Left ventricle myocardium inferior (tissue), 1 donor: ENCODE measurements at regions of chr18 and their contacts with region 1.

Region 1: DNA sequence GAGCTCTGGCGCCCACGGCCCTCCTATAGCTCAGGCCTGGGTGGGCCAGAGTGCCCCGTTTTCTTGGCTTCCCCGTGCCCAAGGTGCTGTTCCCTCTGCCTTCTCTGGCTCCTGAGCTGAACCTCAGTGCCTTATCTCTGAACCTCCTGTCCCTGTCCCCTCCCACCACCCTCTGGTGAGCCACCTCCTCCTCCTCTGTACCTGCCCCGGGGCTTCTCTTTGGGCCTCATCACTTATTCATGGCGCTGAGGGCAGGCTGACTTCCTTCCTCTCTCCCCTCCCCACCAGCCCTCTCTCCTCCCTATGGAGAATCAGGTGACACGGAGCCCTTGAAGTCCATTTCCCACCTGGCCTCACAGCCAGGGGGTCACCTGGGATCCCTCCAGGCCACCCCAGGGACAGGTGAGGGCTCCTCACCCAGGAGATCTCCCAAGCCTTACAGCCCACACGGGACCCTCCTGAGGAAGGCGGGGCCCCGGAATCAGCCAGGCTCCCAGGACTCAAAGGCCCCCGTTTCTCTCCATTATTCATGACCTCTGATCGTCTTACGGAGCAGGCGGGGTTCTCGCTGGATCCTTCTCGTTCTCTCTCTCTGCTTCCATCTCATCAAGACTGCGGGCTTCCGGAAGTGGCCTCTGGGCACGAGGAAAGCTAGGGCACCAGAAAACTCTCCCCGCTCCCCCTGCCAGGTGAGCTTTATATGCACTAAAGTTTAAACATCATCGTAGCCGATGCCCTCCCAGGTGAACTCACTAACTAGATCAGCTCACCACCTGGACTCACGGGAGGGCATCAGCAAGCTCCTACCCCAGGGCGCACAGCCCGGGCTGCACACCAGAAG is at the start of gene LOXHD1:
- DNase-seq: no peak
- H3K4me3 ChIP-seq: no peak within 1 kb of the TSS
- H3K27ac ChIP-seq: no peak within 1 kb of the TSS
- H3K4me1 ChIP-seq: no peaks in the 10 kb centered on the region
- H3K27me3 ChIP-seq: peaks cover 7% of the 10 kb centered on the region
- CTCF ChIP-seq: no peak
- total RNA-seq, gene LOXHD1: 0.49 TPM

Region 2: GRCh38 chr18:46167971-46168370 is 489.4 kb before region 1 on chr18:
- intact Hi-C with region 1: loop called (anchors 10 kb)
- DNase-seq: no peak
- H3K4me3 ChIP-seq: no peak overlapping the region
- H3K27ac ChIP-seq: no peak overlapping the region
- H3K4me1 ChIP-seq: peaks cover 3% of the 10 kb centered on the region
- H3K27me3 ChIP-seq: no peaks in the 10 kb centered on the region
- CTCF ChIP-seq: no peak

Region 3: GRCh38 chr18:46555724-46556123 is 101.6 kb before region 1 on chr18:
- intact Hi-C with region 1: loop called (anchors 10 kb)
- DNase-seq: peak; percentile 33
- H3K4me3 ChIP-seq: no peak overlapping the region
- H3K27ac ChIP-seq: no peak overlapping the region
- H3K4me1 ChIP-seq: no peaks in the 10 kb centered on the region
- H3K27me3 ChIP-seq: no peaks in the 10 kb centered on the region
- CTCF ChIP-seq: peak; percentile 71

Region 4: DNA sequence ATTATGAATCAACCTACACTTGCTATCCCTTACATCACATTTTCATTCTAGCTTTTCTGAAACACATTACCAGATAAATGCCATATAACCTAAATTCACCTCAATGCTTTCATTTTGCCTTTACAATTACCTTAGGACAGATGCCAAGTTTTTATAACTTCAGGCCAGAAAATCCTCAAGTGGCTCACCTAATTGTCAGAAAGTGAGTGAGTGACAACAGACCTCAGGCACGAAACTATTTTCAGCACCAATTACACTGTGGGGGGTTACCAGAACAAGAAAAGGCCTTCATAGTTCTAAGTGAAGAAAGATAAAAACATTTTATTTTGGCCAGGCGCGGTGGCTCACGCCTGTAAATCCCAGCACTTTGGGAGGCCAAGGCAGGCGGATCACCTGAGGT is 151.8 kb after region 1 on chr18:
- intact Hi-C with region 1: no loop called
- DNase-seq: no peak
- H3K4me3 ChIP-seq: no peak overlapping the region
- H3K27ac ChIP-seq: no peak overlapping the region
- H3K4me1 ChIP-seq: peaks cover 3% of the 10 kb centered on the region
- H3K27me3 ChIP-seq: no peaks in the 10 kb centered on the region
- CTCF ChIP-seq: no peak